A549 (cell line): ENCODE measurements at regions of chr16 and their contacts with region 1.

Region 1: GRCh38 chr16:46673320-46674013 is 15.5 kb downstream of the VPS35 start:
- DNase-seq: peak; percentile 74 to 78
- ATAC-seq: peak; percentile 99 to 100
- H3K4me3 ChIP-seq: no peak overlapping the region
- H3K27ac ChIP-seq: no peak overlapping the region
- H3K4me1 ChIP-seq: no peaks in the 10 kb centered on the region
- CTCF ChIP-seq: peak; percentile 93
- EP300 ChIP-seq: no peak
- POLR2A ChIP-seq: no peak
- RAD21 ChIP-seq: peak; percentile 73 to 85

Region 2: DNA sequence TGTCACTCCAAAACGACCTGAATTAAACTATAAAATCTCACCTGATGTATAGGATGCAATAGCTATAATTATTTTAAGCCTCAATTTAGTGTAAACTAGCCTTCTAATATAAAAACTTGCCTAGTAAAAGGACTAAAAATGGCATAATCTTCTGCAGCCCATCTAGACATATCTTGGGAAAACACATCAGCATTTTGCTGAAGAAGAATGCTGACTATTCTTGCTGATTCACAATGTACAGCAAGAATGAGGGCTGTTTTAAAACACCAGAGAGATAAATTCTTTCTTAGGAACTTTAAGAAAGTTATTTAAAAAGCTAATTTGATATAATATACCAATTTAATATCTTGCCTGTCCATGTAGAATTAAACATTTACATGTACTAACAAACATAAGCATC is 115.4 kb before region 1 on chr16:
- CTCF ChIA-PET with region 1: no interaction called
- POLR2A ChIA-PET with region 1: no interaction called
- DNase-seq: no peak
- ATAC-seq: no peak
- H3K4me3 ChIP-seq: no peak overlapping the region
- H3K27ac ChIP-seq: no peak overlapping the region
- H3K4me1 ChIP-seq: no peaks in the 10 kb centered on the region
- CTCF ChIP-seq: no peak
- EP300 ChIP-seq: no peak
- POLR2A ChIP-seq: no peak
- RAD21 ChIP-seq: no peak

Region 3: DNA sequence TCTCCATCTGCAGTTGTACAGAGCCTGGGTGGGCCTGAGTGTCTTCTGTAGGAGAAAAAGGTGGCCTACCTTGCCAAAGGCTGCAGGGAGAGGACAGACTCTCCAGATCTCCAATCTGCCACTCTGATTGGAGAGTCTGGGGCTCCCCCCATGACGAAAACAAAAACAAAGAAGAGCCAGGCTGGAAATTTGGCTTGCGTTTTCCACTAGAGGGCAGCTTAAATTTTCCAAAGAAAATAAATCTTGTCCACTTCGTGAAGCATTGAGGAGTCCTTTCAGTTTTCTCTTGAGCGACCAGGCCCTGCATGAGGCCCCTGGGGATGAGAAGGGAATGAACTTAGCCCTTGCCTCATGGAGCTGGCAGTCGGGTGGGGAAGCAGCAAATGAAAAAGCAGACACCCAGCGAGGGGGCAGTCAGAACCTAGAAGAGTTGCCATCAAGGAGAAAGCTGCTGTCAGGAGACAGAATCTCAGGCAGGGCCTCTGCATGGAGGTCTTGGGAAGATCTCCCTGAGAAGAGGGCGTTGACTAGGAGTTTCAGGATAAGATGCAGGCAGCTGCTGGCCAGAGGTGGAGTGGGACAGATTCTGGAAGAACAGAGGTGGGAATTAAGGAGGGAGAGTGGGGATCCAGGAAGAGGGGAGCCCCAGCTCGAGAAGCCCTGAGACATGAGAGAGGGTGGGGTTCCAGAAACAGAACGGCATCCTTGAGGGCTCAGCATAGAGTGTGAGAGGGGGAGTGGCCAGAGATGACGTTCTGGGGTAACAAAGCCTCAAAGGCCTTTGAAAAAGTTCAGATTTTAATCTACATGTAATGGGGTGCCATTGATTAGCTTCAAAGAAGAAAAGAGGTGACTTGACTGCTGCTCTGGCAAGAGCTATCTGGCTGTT is 43.9 kb before region 1 on chr16:
- CTCF ChIA-PET with region 1: interaction called, 14 read pairs
- POLR2A ChIA-PET with region 1: no interaction called
- DNase-seq: peak; percentile 58 to 60
- ATAC-seq: peak; percentile 53 to 83
- H3K4me3 ChIP-seq: no peak overlapping the region
- H3K27ac ChIP-seq: peak overlapping the region in 1 of 2 experiments; percentile 57; a peak in 3 of 6 replicates
- H3K4me1 ChIP-seq: 0 out of 3 replicates have a peak, but pooled peaks cover 4% of the 10 kb centered on the region
- CTCF ChIP-seq: peak; percentile 44
- EP300 ChIP-seq: no peak
- POLR2A ChIP-seq: no peak
- RAD21 ChIP-seq: peak in 1 of 2 experiments; percentile 19; a peak in 1 of 5 replicates

Region 4: DNA sequence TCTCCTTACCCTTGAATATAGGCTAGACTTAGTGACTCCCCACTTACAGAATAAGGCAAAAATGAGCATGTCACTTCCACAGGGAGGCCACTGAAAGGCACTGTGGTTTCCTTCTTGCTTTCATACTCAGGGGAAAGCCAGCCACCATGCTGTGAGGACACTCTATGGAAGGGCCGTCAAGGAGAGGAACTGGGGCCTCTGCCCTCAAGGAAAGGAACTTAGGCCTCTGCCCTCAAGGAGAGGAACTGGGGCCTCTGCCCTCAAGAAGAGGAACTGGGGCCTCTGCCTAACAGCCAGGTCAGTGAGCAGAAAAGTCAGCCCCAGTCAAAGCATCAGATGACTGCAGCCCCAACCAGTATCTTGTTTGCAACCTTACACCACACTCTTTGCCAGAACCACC is 14.5 kb before region 1 on chr16:
- CTCF ChIA-PET with region 1: interaction called, 27 read pairs
- POLR2A ChIA-PET with region 1: no interaction called
- DNase-seq: no peak
- ATAC-seq: 0 out of 6 replicates have a peak, but pooled peaks of 1 of the 2 experiments have one; percentile 24
- H3K4me3 ChIP-seq: no peak overlapping the region
- H3K27ac ChIP-seq: no peak overlapping the region
- H3K4me1 ChIP-seq: no peaks in the 10 kb centered on the region
- CTCF ChIP-seq: no peak
- EP300 ChIP-seq: no peak
- POLR2A ChIP-seq: no peak
- RAD21 ChIP-seq: no peak

Region 5: GRCh38 chr16:46715769-46716305 is 42.4 kb after region 1 on chr16:
- CTCF ChIA-PET with region 1: no interaction called
- POLR2A ChIA-PET with region 1: no interaction called
- DNase-seq: no peak
- ATAC-seq: no peak
- H3K4me3 ChIP-seq: no peak overlapping the region
- H3K27ac ChIP-seq: no peak overlapping the region
- H3K4me1 ChIP-seq: no peaks in the 10 kb centered on the region
- CTCF ChIP-seq: no peak
- EP300 ChIP-seq: no peak
- POLR2A ChIP-seq: no peak
- RAD21 ChIP-seq: no peak

Region 6: DNA sequence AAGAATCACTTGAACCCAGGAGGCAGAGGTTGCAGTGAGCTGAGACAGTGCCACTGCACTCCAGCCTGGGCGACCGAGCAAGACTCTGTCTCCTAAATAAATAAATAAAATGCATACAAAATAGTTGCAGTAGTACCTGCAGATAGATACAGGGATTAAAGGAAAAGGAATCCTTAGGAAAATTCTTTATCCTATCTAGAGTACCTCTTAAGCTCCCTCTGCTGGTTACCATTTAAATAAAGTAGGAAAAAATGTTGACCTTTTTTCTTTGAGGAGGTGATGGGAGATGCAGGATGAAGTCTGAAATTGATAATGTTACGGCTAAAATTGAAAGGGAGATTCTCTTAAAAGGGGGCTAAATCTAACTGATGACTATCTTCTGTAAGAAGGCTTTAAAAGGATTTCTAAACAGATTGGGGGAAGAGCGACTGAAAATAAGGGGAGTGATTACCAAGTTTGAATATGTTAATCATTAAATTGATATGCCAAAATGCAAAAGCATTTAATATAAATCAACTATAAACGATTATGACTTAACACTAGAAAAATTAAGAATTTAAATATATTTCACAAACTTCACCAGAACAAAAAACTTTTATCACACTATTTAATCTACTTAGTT is 128.1 kb after region 1 on chr16:
- CTCF ChIA-PET with region 1: interaction called, 31 read pairs
- POLR2A ChIA-PET with region 1: no interaction called
- DNase-seq: peak; percentile 37 to 38
- ATAC-seq: peak; percentile 72 to 73; a peak in 5 of 6 replicates
- H3K4me3 ChIP-seq: no peak overlapping the region
- H3K27ac ChIP-seq: no peak overlapping the region
- H3K4me1 ChIP-seq: no peaks in the 10 kb centered on the region
- CTCF ChIP-seq: peak; percentile 55; the same call in 2 of the 3 replicates
- EP300 ChIP-seq: no peak
- POLR2A ChIP-seq: no peak
- RAD21 ChIP-seq: peak; percentile 41 to 43; a peak in 4 of 5 replicates

Region 7: DNA sequence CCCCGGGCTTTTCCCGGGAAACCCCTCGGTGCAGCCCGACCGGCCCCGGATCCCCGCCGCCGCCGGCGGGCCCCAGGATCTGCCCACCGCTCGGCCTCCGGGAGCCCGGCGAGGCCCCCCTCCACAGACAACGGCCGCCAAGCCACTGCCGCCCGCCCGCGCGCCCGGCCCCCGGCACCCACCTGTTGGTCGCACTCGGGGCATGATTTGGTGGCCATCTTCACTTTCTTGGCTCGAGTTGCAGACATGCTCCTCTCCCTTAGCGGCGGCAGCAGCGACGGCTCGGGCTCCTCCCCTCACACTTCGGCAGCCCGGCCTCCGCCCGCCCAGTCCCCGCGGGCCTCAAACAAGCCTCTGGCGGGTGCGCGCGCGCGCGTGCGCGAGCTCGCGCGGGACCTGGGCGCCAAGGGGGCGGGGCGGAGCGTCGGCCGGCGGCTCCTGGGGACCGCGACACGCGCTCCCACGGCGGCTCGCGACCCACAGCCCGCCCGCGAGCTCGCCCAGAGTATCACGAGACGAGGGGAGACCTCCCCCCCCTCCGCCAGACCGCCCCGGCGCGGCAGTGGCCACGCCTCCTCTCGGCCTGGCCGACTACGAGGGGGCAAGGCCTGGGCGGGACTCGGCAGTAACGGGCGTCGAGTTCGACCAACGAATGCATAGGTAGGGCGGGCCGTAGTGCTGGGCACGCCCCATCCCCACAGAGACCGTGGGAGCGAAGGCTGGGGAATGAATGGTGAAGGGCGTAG is 157.6 kb after region 1 on chr16 and contains the start of gene C16orf87:
- CTCF ChIA-PET with region 1: no interaction called
- POLR2A ChIA-PET with region 1: no interaction called
- DNase-seq: peak; percentile 94 to 96
- ATAC-seq: peak; percentile 97 to 98
- H3K4me3 ChIP-seq: peak within 1 kb of the TSS; percentile 80
- H3K27ac ChIP-seq: peak within 1 kb of the TSS; percentile 91 to 94
- H3K4me1 ChIP-seq: peaks cover 41% of the 10 kb centered on the region
- CTCF ChIP-seq: no peak
- EP300 ChIP-seq: no peak
- POLR2A ChIP-seq: peak; percentile 67
- RAD21 ChIP-seq: no peak
- polyA plus RNA-seq, gene C16orf87: 10.1 and 17.1 TPM in 2 replicates

Region 8: GRCh38 chr16:46918861-46919792 is 245.7 kb after region 1 on chr16:
- CTCF ChIA-PET with region 1: interaction called, 10 read pairs
- POLR2A ChIA-PET with region 1: no interaction called
- DNase-seq: no peak
- ATAC-seq: no peak; a peak in 1 of 6 replicates
- H3K4me3 ChIP-seq: no peak overlapping the region
- H3K27ac ChIP-seq: no peak overlapping the region
- H3K4me1 ChIP-seq: no peaks in the 10 kb centered on the region
- CTCF ChIP-seq: no peak
- EP300 ChIP-seq: no peak
- POLR2A ChIP-seq: no peak
- RAD21 ChIP-seq: no peak

Region 9: DNA sequence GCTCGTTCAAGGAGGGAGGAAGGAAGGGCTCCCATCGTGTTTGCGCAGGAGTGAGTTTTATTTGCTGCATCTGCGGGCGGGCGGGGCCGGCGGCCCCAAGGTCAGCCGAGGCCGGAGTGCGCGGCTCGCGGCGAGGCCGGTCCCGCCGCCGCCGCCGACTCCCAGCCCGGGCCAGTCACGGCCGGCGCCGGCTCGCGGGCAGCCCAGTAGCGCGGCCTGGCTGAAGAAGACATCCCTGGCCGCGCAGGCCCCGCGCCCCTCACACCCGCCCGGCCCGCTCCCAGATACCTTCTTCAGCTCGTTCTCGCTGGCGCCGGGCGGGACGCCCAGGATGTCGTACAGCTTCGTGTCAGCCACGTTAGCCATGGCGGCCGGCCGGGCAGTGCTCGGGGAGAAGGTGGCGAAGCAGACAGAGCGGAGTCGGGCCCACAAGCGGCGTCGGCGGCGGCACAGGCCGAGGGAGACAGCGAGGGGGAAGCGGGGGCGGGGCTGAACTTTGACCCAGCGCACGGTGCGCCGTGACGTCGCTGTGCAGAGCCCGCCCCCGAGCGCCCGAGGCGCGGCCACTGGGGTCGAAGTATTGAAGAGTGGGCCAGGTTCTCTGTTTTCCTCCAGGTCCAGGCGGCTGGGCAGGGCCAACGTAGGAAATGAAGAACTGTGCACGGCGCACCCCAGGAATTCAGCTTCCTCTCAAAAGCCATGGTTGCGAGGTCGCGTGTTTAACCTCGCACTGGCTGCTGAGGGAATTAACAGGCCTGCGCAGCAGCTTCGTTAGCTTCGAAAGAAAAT is 299.9 kb after region 1 on chr16 and contains the start of gene DNAJA2:
- CTCF ChIA-PET with region 1: no interaction called
- POLR2A ChIA-PET with region 1: no interaction called
- DNase-seq: peak; percentile 85 to 89
- ATAC-seq: peak; percentile 96
- H3K4me3 ChIP-seq: peak within 1 kb of the TSS; percentile 94
- H3K27ac ChIP-seq: peak within 1 kb of the TSS; percentile 97 to 99
- H3K4me1 ChIP-seq: peaks cover 41% of the 10 kb centered on the region
- CTCF ChIP-seq: no peak
- EP300 ChIP-seq: no peak
- POLR2A ChIP-seq: peak; percentile 79; the same call in 1 of the 2 replicates
- RAD21 ChIP-seq: no peak
- polyA plus RNA-seq, gene DNAJA2: 28.8 and 33.7 TPM in 2 replicates